Dendritic cell treated with granulocyte-macrophage colony-stimulating factor and Interleukin-4, amounts not matched to agents 40 ng/mL and 50 ng/mL, for 4 days (primary cell): ENCODE measurements at regions of chr12 and their contacts with region 1.

Region 1: DNA sequence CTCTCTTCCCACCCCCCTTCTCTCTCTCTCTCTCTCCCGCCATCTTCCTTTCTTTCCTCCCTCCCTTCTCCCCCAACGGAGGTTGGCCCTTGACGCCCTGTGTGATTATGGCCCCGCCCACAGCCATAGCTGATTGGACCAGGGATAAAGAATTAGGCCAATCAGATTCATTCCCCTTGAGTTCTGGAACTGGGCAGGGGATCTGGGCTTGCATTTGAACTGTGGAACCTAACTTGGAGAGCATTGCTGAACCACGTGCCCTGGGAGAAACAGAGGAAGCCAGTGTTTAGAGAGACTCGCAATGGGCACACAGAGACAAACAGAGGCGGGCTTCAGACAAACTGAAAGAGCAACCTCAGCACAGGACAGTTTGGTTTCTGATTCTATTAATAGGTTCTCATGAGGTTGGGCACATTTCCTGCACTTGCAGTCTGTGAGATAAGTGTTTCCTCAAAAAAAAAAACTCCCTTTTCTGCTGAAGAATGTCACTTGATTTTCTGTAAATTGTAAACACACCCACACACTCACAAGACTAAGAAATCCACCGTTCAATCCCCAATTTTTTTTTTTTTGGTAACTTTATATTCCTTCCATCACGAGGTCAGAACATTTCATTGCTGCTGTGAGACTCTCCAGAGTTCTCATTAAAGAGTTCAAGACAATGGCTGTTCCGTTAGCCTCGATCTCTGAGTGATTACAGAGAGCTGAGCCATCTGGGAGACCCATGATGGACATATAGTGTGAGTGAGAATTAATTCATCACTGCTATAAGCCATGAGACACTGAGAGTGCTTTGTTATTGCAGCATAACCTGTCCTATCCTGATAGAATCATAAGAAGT is 3.5 kb upstream of the P2RX7 start:
- H3K4me3 Mint-ChIP-seq: peak overlapping the region; percentile 53
- H3K27ac Mint-ChIP-seq: peak overlapping the region; percentile 92
- H3K4me1 Mint-ChIP-seq: peaks cover 82% of the 10 kb centered on the region
- H3K27me3 Mint-ChIP-seq: no peaks in the 10 kb centered on the region

Region 2: GRCh38 chr12:121144416-121144914 is 15.3 kb after region 1 on chr12:
- intact Hi-C with region 1: loop called (anchors 1 kb)
- H3K4me3 Mint-ChIP-seq: peak overlapping the region; percentile 11
- H3K27ac Mint-ChIP-seq: peak overlapping the region; percentile 89
- H3K4me1 Mint-ChIP-seq: peaks cover 62% of the 10 kb centered on the region
- H3K27me3 Mint-ChIP-seq: no peaks in the 10 kb centered on the region

Region 3: GRCh38 chr12:121175383-121176227 is 46.4 kb after region 1 on chr12:
- intact Hi-C with region 1: loop called (anchors 2 kb)
- H3K4me3 Mint-ChIP-seq: no peak overlapping the region
- H3K27ac Mint-ChIP-seq: peak overlapping the region; percentile 76
- H3K4me1 Mint-ChIP-seq: peaks cover 38% of the 10 kb centered on the region
- H3K27me3 Mint-ChIP-seq: no peaks in the 10 kb centered on the region

Region 4: DNA sequence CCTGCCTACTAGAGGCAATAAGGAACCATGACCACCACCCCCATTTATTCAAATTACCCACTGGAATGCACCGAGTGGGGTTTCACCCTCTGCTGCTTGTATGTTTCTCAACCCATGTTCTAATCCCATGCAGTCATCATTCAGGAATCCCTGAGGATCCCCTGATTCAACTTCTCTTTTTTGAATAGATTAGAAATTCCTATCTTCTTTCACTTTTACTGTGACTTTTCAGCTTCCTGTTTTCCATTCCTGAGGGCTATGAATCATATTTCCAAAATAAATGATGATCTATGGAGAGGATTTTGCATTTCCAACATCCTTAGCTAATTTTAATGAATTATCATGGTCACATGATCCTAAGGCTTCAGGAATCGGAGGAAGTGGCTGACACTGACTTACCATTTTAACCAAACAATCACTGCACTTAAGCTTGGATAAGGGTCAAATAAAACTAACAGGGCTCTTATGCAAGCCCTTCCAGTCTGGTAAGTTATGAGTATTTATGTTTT is 61.4 kb after region 1 on chr12:
- intact Hi-C with region 1: loop called (anchors 5 kb)
- H3K4me3 Mint-ChIP-seq: no peak overlapping the region
- H3K27ac Mint-ChIP-seq: peak overlapping the region; percentile 47
- H3K4me1 Mint-ChIP-seq: peaks cover 55% of the 10 kb centered on the region
- H3K27me3 Mint-ChIP-seq: no peaks in the 10 kb centered on the region

Region 5: DNA sequence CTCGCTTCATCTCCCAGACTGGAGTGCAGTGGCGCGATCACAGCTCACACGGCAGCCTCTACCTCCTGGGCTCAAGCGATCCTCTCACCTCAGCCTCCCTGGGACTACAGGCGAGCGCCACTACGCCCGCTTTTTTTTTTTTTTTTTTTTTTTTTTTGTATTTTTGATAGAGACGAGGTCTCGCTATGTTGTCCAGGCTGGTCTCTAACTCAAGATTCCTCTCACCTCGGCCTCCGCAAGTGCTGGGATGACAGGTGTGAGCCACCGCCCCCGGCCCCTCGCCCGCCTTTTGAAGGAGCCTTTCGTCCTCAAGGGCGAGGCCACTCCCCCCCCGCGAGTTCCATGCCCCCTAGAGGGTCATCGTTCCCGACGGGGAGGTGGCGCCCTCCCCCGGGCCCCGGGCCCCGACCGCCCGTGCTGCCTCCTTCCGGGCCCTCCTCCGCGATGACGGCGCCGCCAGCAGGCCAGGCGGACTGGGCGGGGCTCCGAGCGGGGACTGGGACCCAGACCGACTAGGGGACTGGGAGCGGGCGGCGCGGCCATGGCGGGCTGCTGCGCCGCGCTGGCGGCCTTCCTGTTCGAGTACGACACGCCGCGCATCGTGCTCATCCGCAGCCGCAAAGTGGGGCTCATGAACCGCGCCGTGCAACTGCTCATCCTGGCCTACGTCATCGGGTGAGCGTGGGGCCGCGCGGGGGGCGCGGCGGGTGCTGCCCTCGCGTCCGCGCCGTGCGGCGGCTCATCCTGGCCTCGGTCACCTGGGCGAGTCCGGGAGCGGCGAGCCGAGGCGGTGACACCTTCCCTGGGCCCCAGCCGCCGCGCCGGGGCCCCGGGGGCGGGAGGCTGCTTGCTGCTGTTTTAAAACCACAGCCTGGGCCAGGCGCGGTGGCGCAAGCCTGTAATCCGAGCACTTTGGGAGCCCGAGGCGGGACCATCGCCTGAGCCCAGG is 80.7 kb after region 1 on chr12 and contains the start of gene P2RX4:
- intact Hi-C with region 1: loop called (anchors 1 kb)
- H3K4me3 Mint-ChIP-seq: peak within 1 kb of the TSS; percentile 92
- H3K27ac Mint-ChIP-seq: peak within 1 kb of the TSS; percentile 96
- H3K4me1 Mint-ChIP-seq: peaks cover 44% of the 10 kb centered on the region
- H3K27me3 Mint-ChIP-seq: no peaks in the 10 kb centered on the region

Region 6: GRCh38 chr12:121214855-121215745 is 85.9 kb after region 1 on chr12:
- intact Hi-C with region 1: loop called (anchors 1 kb)
- H3K4me3 Mint-ChIP-seq: peak overlapping the region; percentile 40
- H3K27ac Mint-ChIP-seq: peak overlapping the region; percentile 89
- H3K4me1 Mint-ChIP-seq: peaks cover 66% of the 10 kb centered on the region
- H3K27me3 Mint-ChIP-seq: no peaks in the 10 kb centered on the region